Activated T-helper 1 cell treated with anti-CD3 and anti-CD28 coated beads, Interleukin-12 subunit alpha, Interleukin-12 subunit beta, Interleukin-2, Interleukin-4 antibody, amounts not matched to agents 30 ng/mL and 10 ng/mL and 1 ng/mL, durations not matched to agents 14 hours and 24 hours and 36 hours (primary cell): ENCODE measurements at regions of chr3 and their contacts with region 1.

Region 1: GRCh38 chr3:108388136-108389132 is 92.1 kb downstream of the HHLA2 start:
- DNase-seq: no peak
- H3K4me3 Mint-ChIP-seq: no peak overlapping the region
- H3K27ac Mint-ChIP-seq: peak overlapping the region; percentile 50
- H3K4me1 Mint-ChIP-seq: peaks cover 24% of the 10 kb centered on the region
- H3K27me3 Mint-ChIP-seq: peaks cover 7% of the 10 kb centered on the region

Region 2: DNA sequence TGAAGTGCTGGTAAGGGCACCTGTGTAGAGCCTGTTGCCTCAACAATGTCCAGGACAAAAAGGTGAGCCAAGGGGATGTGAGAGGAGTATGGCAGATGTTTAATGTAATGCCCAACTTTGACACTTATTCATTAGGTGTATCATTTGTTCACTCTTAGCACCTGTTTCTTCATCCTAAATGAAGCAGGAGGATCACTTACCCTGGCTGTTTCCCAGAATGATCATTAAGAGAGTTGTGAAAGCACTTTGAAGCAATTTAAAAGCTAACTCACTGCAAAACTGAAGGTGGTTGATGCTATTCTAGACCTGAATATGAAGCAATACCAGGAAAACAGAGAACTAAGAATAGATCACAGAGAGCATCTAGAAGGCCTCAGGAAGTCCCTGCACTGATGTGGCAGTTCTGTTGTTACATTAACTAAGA is 95.5 kb before region 1 on chr3:
- intact Hi-C with region 1: loop called (anchors 1 kb)
- DNase-seq: no peak
- H3K4me3 Mint-ChIP-seq: peak overlapping the region; percentile 53
- H3K27ac Mint-ChIP-seq: peak overlapping the region; percentile 83
- H3K4me1 Mint-ChIP-seq: peaks cover 64% of the 10 kb centered on the region
- H3K27me3 Mint-ChIP-seq: peaks cover 2% of the 10 kb centered on the region

Region 3: GRCh38 chr3:108334701-108335100 is 53.7 kb before region 1 on chr3:
- intact Hi-C with region 1: loop called (anchors 2 kb)
- DNase-seq: no peak
- H3K4me3 Mint-ChIP-seq: no peak overlapping the region
- H3K27ac Mint-ChIP-seq: no peak overlapping the region
- H3K4me1 Mint-ChIP-seq: peaks cover 22% of the 10 kb centered on the region
- H3K27me3 Mint-ChIP-seq: no peaks in the 10 kb centered on the region

Region 4: DNA sequence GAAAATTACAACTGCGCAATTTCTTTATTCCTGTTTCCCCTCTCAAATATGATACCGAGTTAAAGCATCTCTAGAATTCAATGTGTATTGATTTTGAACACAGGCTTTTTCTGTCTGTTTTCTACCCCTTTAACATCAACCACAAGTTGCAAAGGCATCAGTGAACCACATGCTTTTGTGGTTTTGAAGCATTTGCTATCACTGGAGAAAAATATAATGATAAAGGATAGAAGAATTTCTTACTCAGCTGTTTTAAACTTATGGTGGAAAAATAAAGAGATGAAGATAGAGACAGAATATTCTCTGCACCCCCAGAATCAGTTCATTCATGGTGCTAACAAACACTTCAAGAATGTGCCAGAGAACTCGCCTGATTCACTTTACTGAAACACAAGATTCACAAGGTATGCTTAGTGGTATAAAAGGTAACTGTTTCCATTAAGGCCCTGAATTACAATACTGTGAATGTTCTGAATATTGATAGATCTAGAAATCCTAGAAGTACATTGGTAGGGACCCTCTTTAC is 958.4 kb after region 1 on chr3:
- intact Hi-C with region 1: no loop called
- DNase-seq: no peak
- H3K4me3 Mint-ChIP-seq: no peak overlapping the region
- H3K27ac Mint-ChIP-seq: no peak overlapping the region
- H3K4me1 Mint-ChIP-seq: no peaks in the 10 kb centered on the region
- H3K27me3 Mint-ChIP-seq: no peaks in the 10 kb centered on the region